Lower lobe of right lung (tissue), 2 donors: ENCODE measurements at regions of chr18 and their contacts with region 1.

Region 1: GRCh38 chr18:9147440-9148202 is 11.0 kb downstream of the ANKRD12 start:
- DNase-seq: no peak
- ATAC-seq: peak; percentile 85 to 89
- H3K4me3 ChIP-seq: no peak overlapping the region
- H3K27ac ChIP-seq: peak overlapping the region; percentile 19
- H3K4me1 ChIP-seq: peaks cover 96% of the 10 kb centered on the region
- H3K27me3 ChIP-seq: no peaks in the 10 kb centered on the region
- CTCF ChIP-seq: peak; percentile 75

Region 2: DNA sequence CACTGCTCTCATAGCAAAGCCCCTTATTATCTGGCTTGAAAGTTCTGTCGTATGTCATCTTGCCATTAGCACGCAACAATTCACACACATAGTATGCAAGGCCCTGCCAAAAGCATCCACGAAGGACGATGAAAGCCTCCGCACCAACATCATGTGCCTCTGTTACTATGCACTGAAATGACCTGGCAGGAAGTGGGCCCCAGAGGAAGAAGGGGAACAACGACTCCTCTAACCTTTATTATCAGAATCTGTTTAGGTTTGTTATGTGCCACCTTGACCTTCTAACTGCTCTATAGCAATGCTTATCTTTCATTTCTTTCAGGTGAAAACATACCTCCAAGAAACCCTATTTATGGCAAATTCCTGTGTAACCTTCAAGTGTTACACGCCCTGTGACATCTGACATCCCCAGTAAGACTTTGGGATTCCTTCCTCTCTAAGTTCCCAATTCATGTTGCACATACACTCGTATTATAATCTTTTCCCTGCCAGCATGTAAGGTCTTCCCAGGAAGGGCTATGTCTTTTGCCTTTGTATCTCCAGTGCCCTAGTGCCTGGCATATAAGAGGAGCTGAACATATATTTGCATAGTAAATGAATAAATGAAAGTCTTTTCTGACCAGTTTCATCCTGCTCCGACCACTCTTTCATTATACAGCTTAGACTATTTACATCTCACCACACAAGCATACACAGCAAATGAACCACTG is 52.2 kb before region 1 on chr18:
- intact Hi-C with region 1: loop called (anchors 10 kb)
- DNase-seq: no peak
- ATAC-seq: peak; percentile 37 to 54
- H3K4me3 ChIP-seq: no peak overlapping the region
- H3K27ac ChIP-seq: no peak overlapping the region
- H3K4me1 ChIP-seq: peaks cover 8% of the 10 kb centered on the region
- H3K27me3 ChIP-seq: no peaks in the 10 kb centered on the region
- CTCF ChIP-seq: no peak